MCF 10A (cell line): ENCODE measurements at regions of chr1 and their contacts with region 1.

Region 1: DNA sequence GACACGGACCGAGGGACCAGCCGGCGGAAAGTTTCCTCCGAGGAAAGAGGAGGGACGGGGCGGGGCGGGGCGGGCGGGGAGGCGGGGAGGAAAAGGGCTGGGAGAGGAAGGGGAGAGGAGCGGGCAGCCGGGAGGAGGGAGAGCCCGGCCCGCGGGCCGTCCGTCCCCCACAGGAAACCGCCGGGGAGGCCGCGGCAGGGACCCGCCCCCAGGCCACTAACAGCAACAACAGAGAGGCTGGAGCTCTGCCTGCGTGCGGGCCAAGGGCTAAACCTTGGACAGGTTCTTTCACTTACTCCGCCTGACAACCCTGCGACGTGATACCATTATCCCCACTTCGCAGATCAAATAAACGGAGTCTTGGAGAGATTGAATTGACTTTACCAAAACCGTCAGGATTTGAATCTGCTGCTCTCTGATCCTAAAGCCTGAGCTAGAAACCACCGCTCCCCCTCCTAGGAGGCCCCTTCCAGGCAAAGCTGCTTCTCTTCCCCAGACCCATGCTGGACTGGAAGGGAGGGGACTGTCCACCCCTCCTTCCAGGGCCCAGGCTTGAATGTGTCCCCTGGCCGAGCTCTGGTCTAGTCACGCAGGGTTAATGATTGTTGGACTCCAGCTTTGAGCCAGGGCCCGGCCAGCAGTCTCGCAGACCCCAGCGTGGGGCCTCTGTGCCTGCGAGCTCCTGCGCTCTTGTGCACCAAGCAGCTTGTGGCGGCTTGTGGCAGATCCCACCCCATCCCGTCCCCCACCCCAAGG is at the start of gene EVA1B:
- DNase-seq: peak; percentile 50
- H3K4me3 Mint-ChIP-seq: peak within 1 kb of the TSS; percentile 19
- H3K27ac Mint-ChIP-seq: no peak within 1 kb of the TSS
- H3K4me1 Mint-ChIP-seq: peaks cover 23% of the 10 kb centered on the region
- H3K27me3 Mint-ChIP-seq: no peaks in the 10 kb centered on the region
- CTCF ChIP-seq: no peak
- total RNA-seq, gene EVA1B: 4.8 and 5.7 TPM in 2 replicates

Region 2: GRCh38 chr1:36024839-36025238 is 298.9 kb before region 1 on chr1:
- CTCF ChIA-PET with region 1: no interaction called
- POLR2A ChIA-PET with region 1: no interaction called
- intact Hi-C with region 1: no loop called
- DNase-seq: no peak
- H3K4me3 Mint-ChIP-seq: no peak overlapping the region
- H3K27ac Mint-ChIP-seq: no peak overlapping the region
- H3K4me1 Mint-ChIP-seq: peaks cover 6% of the 10 kb centered on the region
- H3K27me3 Mint-ChIP-seq: no peaks in the 10 kb centered on the region
- CTCF ChIP-seq: no peak

Region 3: GRCh38 chr1:36463803-36464604 is 140.2 kb after region 1 on chr1 and contains the start of gene MRPS15:
- CTCF ChIA-PET with region 1: no interaction called
- POLR2A ChIA-PET with region 1: no interaction called
- intact Hi-C with region 1: no loop called
- DNase-seq: peak; percentile 95
- H3K4me3 Mint-ChIP-seq: peak within 1 kb of the TSS; percentile 99
- H3K27ac Mint-ChIP-seq: peak within 1 kb of the TSS; percentile 97
- H3K4me1 Mint-ChIP-seq: peaks cover 15% of the 10 kb centered on the region
- H3K27me3 Mint-ChIP-seq: no peaks in the 10 kb centered on the region
- CTCF ChIP-seq: no peak
- total RNA-seq, gene MRPS15: 95.6 and 101 TPM in 2 replicates

Region 4: DNA sequence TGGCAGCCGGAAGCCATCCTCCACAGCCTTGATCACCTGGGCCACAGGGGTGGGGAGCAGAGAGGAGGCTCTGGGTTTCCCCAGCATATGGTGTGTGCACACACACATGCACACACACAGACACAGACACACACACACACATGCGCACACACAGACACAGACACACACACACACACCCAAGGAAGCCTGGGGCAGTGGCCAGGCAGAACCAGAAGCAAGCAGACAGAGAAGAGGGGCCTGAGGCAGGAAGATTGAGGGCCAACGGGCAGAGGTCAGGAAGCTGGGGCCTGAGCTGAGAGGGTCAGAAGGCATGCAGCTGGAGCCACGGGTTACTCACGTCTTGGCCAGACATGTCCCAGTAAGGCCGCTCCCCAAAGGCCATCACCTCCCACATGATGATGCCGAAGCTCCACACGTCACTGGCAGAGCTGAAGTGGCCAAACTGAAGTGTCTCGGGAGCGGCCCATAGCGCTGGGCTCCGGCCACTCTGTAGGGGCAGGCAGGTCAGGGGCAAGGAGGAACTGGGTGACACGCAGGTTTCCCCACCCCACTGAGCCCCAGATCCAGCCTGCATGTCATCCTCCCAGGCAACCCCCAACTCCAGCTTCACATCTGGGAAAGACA is 1395.9 kb after region 1 on chr1:
- CTCF ChIA-PET with region 1: no interaction called
- POLR2A ChIA-PET with region 1: no interaction called
- intact Hi-C with region 1: loop called (anchors 10 kb)
- DNase-seq: no peak
- H3K4me3 Mint-ChIP-seq: no peak overlapping the region
- H3K27ac Mint-ChIP-seq: no peak overlapping the region
- H3K4me1 Mint-ChIP-seq: no peaks in the 10 kb centered on the region
- H3K27me3 Mint-ChIP-seq: peaks cover 9% of the 10 kb centered on the region
- CTCF ChIP-seq: no peak